ENCODE measurements at regions of chr17 and their contacts with region 1.

Region 1: DNA sequence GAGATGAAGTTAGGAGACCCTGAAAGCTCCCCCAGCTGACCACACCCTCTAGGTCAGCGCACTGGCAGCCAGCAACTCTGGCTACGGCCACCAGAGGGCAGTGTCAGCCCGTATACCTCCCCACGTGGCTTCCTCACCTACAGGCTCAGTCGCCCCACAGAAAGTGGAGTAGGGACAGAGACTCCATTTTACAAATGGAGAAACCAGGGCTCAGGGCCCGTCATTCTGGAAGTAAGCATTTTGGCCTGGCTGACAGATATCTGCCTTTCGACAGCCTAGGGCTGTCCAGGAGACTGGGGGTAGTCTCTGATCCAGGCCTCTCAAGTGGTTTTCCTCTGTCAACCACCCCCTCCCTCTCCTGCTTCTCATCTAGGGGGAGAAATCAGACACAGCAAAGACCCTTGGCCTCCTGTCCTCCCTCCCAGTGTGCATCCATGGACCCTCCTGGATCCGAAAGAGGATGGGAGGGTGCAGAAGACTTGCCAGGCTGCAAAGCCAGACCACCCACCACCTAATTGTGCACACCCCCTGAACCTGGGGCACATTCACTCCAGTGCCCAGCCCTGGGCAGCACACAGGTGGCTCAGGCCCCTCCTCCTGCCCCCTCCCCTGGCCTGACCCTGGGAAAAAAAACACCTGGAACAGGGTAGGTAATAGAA is 3.8 kb upstream of the HAP1 start:
- DNase-seq: peak; percentile 71 to 95 (median 88)
- ATAC-seq: peak; percentile 88 to 94 (median 91)
- H3K4me3 ChIP-seq: no peak overlapping the region
- H3K27ac ChIP-seq: no peak overlapping the region
- H3K4me1 ChIP-seq: peaks cover 7 to 13% (median 11%) of the 10 kb centered on the region in 3 donors
- H3K27me3 ChIP-seq: peaks cover 0 to 19% (median 3%) of the 10 kb centered on the region in 4 donors
- CTCF ChIP-seq: peak; percentile 94 to 99 (median 98)

Region 2: DNA sequence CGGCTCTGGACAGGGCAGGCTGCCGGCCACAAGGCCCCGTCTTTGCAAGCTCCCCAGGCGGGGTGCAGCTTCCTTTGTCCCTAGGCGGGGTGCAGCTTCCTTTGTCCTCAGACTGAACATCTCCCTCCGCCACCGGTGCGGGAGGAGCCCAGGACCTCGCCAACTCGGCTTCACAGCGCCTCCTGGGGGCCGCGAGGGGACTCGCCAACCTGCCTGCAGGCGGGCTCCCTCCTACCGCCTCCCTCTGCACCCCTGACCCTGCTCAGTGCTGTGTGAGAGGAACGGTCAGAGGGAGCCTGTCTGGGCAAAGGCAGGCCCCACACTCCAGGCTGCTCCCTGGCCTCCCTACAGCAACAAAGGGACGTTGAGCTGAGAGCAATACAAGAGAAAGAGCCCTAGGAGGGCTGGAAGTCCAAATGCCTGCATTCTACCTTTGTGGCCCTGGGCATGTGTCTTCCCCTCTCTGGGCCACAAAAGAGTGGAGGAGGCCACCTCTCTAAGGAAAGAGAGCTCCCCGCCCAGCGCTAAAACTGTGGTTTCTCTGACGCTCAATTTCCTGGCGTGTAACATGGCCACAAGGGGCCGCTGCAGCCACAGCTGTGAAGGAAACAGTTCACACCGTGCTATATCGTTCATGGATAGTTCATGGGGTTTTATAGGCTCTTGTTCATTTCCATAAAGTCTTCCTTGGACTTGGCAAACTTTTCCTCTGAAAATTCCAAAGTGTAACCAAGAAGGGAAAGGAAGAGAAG is 189.2 kb before region 1 on chr17:
- intact Hi-C with region 1: no loop called
- DNase-seq: peak; percentile 67 to 91 (median 80)
- ATAC-seq: peak; percentile 89 to 93 (median 92)
- H3K4me3 ChIP-seq: peak overlapping the region in 2 of 4 donors; percentile 3 to 30
- H3K27ac ChIP-seq: peak overlapping the region in 2 of 4 donors; percentile 58 to 63
- H3K4me1 ChIP-seq: peaks cover 0 to 14% (median 7%) of the 10 kb centered on the region in 3 donors
- H3K27me3 ChIP-seq: no peaks in the 10 kb centered on the region
- CTCF ChIP-seq: peak; percentile 70 to 90 (median 78)

Region 3: DNA sequence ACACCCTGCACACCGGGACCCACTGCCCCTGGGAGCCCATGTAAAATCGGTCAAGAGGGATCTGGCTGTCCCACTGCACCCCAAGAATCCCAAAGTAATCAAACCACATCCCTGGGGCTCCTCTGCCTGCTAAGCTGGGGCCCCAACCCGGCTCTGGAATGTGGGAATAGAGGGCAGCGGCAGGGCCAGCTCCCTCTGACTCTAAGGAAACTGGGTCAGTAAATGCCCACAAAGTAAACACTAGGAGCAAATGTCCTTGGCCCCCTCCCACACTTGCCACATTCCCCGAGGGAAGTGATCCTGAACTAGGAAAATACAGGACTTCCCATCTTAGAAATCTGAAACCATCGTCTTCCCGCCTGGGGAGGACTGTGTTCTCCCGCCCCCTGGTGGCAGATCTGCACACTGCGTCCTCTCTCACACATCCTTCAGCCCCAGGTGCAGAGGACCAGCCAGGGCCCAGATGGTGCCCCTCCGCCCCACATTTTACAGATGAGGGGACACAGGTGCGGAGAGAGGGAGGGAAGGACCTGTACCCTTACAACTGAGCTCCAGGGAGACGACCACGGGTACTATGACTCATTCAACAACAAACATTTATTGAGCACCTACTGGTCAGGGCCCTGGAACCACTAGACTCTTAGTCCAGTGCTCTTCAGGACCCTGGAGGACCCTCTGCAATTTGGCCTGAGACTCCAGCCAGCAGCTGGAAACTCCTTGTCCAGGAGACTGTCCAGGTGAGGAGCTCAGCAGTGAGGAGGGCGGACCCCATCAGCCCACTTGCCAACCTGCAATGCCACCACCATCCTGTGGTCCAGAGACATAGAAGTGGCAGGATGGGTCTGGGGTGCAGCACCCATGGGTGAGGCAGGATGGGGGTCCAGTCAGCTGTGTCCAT is 63.4 kb after region 1 on chr17:
- intact Hi-C with region 1: loop called (anchors 2 to 10 kb)
- DNase-seq: peak; percentile 67 to 95 (median 86)
- ATAC-seq: peak; percentile 88 to 96 (median 94)
- H3K4me3 ChIP-seq: no peak overlapping the region
- H3K27ac ChIP-seq: no peak overlapping the region
- H3K4me1 ChIP-seq: peaks cover 5% of the 10 kb centered on the region in 3 donors
- H3K27me3 ChIP-seq: no peaks in the 10 kb centered on the region
- CTCF ChIP-seq: peak; percentile 93 to 98 (median 94)

Region 4: DNA sequence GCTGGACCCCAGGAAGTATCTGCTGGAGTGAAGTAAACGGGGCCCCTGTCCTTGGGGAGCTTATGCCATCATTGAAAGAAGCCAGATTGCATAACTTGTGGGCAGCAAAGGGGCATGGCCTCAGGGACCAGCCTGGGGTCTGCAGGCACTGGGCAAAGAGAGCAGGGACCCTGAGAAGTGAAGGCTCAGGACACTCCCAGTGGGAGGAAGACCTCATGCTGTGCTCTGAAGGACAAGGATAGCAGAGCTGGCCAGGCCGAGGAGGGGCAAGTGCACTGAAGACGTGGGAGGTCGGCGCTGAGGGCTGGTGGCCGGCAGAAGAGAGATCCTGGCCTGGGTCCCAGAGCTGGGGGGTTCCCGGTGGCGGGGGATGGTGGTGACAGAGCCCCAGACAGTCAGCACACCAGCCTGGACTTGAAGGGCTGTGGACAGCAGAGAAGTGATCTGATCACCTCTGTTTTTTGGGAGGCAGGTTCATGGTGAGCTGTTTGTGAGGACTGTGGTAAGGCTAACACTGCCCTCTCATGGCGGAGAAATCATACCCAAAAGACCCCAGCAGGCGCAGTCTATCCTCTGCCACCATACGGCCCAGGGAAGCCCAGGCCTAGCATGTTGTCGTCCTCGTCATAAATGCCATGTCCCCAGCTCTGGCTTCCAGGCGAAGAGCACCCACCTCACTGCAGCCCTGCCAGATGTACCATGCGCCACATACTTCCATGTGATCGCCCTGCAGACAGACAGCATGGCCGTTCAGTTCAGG is 221.3 kb after region 1 on chr17:
- intact Hi-C with region 1: loop called in 1 of 3 experiments (anchors 10 kb)
- DNase-seq: peak in 3 of 6 donors; percentile 49 to 61 (median 55)
- ATAC-seq: peak in 3 of 4 donors; percentile 48 to 58 (median 51)
- H3K4me3 ChIP-seq: no peak overlapping the region
- H3K27ac ChIP-seq: peak overlapping the region; percentile 5 to 58 (median 36)
- H3K4me1 ChIP-seq: peaks cover 17 to 40% (median 21%) of the 10 kb centered on the region in 3 donors
- H3K27me3 ChIP-seq: no peaks in the 10 kb centered on the region
- CTCF ChIP-seq: peak in 3 of 4 donors; percentile 7 to 24 (median 17)